HCT116 (cell line): ENCODE measurements at regions of chr1 and their contacts with region 1.

Region 1: DNA sequence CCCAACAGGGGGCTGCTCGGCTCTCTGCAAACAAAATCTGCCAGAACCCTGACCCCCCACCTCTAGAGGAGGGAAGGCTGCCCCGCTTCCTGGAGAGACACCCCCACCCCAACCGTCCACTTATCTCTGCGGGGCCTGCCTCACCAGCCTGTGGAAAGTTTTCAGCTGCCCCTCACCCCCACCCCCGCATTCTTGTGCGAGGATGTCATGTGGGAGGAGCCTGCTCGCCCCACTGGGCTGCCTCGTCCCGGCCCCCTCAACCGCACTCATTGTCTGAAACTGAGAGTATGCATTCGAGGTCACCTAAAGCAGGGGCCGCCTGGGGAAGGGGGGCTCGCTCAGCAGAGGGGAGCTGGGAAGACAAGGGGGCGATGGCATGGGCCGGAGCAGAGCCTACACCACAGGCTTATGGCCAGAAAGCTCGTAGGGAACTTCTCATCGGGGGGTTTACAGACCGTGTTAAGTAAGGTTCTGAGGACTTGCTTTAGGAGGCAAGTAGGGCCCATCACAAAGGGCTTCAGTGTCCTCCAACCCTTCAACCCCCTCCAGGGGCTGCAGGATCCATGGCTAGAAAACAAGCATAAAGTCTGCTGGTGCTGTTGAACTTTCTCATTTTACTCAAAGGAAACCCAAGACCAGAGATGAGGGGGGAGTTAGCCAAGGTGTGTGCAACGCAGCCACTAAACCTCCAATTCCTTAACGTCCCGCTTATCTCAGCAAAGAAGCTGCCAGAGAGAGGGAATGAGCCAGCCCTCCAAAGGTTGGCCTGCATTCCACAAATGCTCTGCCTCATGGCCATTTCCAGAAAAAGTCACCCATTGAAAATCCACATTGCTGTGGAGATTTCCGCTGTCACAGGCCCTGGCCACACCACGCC is 9.4 kb downstream of the EPHA2 start:
- DNase-seq: no peak
- ATAC-seq: peak; percentile 28
- H3K4me3 ChIP-seq: peak overlapping the region; percentile 31 to 53
- H3K27ac ChIP-seq: peak overlapping the region; percentile 100
- H3K4me1 ChIP-seq: peaks cover 87 to 100% of the 10 kb centered on the region in 2 experiments
- H3K27me3 ChIP-seq: no peaks in the 10 kb centered on the region
- CTCF ChIP-seq: no peak
- POLR2A ChIP-seq: no peak
- RAD21 ChIP-seq: no peak

Region 2: DNA sequence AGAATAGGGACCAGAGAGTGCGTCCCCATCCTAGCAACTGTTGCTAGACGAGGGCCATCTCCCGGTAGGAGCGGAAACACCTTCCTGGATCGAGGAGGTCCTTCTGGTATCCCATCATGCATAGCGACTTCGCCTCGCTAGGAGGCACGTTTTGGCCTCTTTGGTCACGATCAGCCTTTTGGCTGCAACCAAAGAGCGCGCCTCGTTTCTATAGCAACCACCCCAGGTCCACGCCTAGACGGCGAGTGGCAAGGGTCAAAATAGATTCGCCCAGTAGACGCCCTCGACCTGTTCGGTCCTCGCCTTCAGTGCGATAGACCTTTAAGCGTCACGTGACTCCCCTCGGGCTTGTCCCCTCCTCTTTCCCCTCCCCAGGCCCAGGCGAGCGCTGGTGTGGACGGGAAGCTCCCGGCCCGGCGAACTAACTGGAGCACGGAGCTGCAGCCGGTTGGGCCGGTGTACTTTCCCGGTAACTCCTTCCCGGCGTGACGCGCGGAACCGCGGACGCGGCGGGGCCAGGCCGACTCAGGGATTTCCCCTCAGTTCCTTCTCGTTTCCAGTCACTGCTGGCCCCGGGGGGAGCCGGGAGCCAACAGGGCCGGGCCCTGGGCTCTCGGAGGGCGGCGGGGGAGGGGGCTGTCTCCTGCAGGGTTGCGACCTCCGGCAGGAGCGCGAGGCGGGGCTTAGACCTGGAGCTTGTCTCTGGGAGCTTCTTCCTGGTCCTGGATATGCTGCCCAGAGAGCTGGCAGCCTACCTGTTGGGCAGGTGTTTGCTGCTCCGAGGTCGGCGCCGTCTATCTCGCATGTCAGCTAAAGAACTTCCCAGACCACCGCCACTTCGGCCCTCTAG is 619.8 kb before region 1 on chr1 and contains the start of gene DNAJC16:
- CTCF ChIA-PET with region 1: no interaction called
- POLR2A ChIA-PET with region 1: no interaction called
- RAD21 ChIA-PET with region 1: no interaction called
- intact Hi-C with region 1: loop called (anchors 5 kb)
- DNase-seq: peak; percentile 100
- ATAC-seq: peak; percentile 71
- H3K4me3 ChIP-seq: peak within 1 kb of the TSS; percentile 80 to 84
- H3K27ac ChIP-seq: peak within 1 kb of the TSS; percentile 73
- H3K4me1 ChIP-seq: peaks cover 10 to 31% of the 10 kb centered on the region in 2 experiments
- H3K27me3 ChIP-seq: no peaks in the 10 kb centered on the region
- CTCF ChIP-seq: peak in 1 of 3 experiments; percentile 8; a peak in 1 of 6 replicates
- POLR2A ChIP-seq: peak; percentile 61
- RAD21 ChIP-seq: no peak
- total RNA-seq, gene DNAJC16: 20.6 TPM

Region 3: GRCh38 chr1:15788624-15789301 is 357.8 kb before region 1 on chr1:
- CTCF ChIA-PET with region 1: no interaction called
- POLR2A ChIA-PET with region 1: no interaction called
- RAD21 ChIA-PET with region 1: no interaction called
- intact Hi-C with region 1: loop called (anchors 5 kb)
- DNase-seq: no peak
- ATAC-seq: peak; percentile 35
- H3K4me3 ChIP-seq: no peak overlapping the region
- H3K27ac ChIP-seq: peak overlapping the region; percentile 23
- H3K4me1 ChIP-seq: peaks cover 26 to 65% of the 10 kb centered on the region in 2 experiments
- H3K27me3 ChIP-seq: no peaks in the 10 kb centered on the region
- CTCF ChIP-seq: no peak
- POLR2A ChIP-seq: no peak
- RAD21 ChIP-seq: no peak

Region 4: DNA sequence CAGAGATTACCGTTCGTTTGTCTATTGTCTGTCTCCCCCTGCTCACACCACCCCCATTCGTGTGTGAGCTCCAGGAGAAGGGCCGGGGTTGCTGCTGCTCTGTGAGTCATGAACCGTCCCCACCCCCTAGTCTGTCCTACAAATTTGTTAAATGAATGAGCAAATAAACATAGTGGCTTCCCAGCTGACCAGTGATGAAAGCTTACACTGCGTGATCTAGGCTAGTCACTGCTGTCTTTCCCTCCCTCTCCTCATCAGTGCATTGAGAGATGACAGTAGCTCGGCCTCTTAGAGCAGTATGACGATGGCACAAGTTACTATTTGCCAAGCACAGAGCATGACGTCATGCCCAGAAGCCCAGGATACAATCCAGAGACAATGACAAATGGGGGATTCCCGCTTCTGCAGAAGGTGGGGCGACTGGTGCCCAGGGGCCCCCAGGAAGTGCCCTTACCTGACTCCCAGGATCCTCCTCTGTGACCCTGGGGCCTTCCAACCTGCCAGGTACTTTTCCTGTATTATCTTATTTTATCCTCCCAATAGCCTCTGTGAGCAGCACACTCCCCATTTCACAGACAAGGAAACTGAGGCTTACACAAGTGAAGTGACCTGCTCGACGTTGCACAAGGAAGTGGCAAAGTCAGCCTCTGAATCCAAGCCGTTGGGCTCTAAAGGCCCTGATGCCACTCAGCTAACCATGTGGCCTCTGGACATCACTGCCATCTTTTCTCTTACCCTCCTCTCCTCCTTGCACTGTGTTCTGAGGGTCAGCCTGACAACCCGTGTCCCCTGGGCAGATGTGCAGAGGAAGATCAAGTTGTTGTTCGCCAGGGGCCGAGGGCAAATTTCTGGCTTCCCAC is 17.9 kb after region 1 on chr1:
- CTCF ChIA-PET with region 1: interaction called, 3 read pairs
- POLR2A ChIA-PET with region 1: interaction called, 13 read pairs
- RAD21 ChIA-PET with region 1: interaction called in 1 of 2 experiments, 3 read pairs
- intact Hi-C with region 1: no loop called
- DNase-seq: no peak
- ATAC-seq: peak; percentile 31
- H3K4me3 ChIP-seq: peak overlapping the region in 1 of 2 experiments; percentile 25; a peak in 1 of 4 replicates
- H3K27ac ChIP-seq: peak overlapping the region; percentile 27
- H3K4me1 ChIP-seq: peaks cover 67 to 94% of the 10 kb centered on the region in 2 experiments
- H3K27me3 ChIP-seq: no peaks in the 10 kb centered on the region
- CTCF ChIP-seq: no peak
- POLR2A ChIP-seq: no peak
- RAD21 ChIP-seq: no peak

Region 5: DNA sequence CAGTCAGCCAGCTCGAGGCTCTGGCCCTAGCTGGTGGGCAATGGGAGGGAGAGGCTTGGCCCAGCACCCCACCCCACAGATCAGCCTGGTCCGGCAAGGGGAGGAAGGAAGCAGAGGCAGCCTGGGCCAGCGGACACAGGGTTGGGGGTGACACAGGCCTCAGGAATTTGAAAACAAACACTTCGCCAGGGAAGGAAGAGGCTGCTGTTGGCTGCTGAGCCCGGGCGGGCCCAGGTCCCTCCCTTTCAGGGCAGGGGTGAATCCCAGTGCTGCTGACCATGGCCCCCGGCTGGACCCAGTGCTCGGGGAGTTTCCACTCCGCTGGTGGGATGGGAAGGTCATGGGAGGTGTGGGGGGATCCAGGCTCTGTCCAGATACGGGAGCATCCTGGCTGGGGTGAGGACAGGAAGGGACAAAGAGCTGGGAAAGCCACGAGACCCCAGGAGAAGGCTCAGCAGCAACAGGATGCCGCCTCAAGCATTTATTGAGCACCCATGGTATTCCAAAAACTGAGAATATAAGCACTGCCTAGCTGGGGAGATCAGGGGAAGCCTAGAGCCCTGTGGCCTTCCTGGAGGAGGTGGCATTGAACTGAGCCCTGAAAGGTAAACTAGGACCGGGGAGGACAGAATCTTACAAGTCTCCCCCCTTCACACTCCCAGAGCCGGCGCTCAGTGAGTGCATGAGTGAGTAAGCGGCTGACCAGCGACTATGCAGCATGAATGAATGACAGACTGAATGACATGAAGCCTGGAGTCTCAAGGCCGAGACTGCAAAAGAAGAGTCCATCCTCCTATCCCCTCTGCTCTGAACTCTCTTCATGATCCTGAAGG is 35.6 kb after region 1 on chr1:
- CTCF ChIA-PET with region 1: interaction called, 6 read pairs
- POLR2A ChIA-PET with region 1: interaction called, 13 read pairs
- RAD21 ChIA-PET with region 1: no interaction called
- intact Hi-C with region 1: loop called (anchors 2 kb)
- DNase-seq: peak; percentile 77
- ATAC-seq: peak; percentile 87
- H3K4me3 ChIP-seq: peak overlapping the region; percentile 19 to 49
- H3K27ac ChIP-seq: peak overlapping the region; percentile 94
- H3K4me1 ChIP-seq: peaks cover 74 to 89% of the 10 kb centered on the region in 2 experiments
- H3K27me3 ChIP-seq: no peaks in the 10 kb centered on the region
- CTCF ChIP-seq: no peak
- POLR2A ChIP-seq: no peak
- RAD21 ChIP-seq: no peak

Region 6: GRCh38 chr1:16217061-16217785 is 70.7 kb after region 1 on chr1:
- CTCF ChIA-PET with region 1: no interaction called
- POLR2A ChIA-PET with region 1: interaction called, 5 read pairs
- RAD21 ChIA-PET with region 1: no interaction called
- intact Hi-C with region 1: loop called (anchors 2 kb)
- DNase-seq: peak; percentile 96
- ATAC-seq: peak; percentile 93
- H3K4me3 ChIP-seq: peak overlapping the region; percentile 56 to 62
- H3K27ac ChIP-seq: peak overlapping the region; percentile 5; the same call in 1 of the 2 replicates
- H3K4me1 ChIP-seq: peaks cover 26 to 47% of the 10 kb centered on the region in 2 experiments
- H3K27me3 ChIP-seq: no peaks in the 10 kb centered on the region
- CTCF ChIP-seq: no peak
- POLR2A ChIP-seq: no peak
- RAD21 ChIP-seq: no peak